ENCODE measurements at regions of chr11 and their contacts with region 1.

Region 1: GRCh38 chr11:62337303-62338181 is at the start of gene ASRGL1:
- DNase-seq: peak; percentile 80
- H3K4me3 ChIP-seq: peak within 1 kb of the TSS; percentile 74
- H3K27ac ChIP-seq: peak within 1 kb of the TSS; percentile 38
- H3K4me1 ChIP-seq: peaks cover 20% of the 10 kb centered on the region
- H3K27me3 ChIP-seq: peaks cover 12% of the 10 kb centered on the region
- CTCF ChIP-seq: no peak
- total RNA-seq, gene ASRGL1: 37.7 and 40.1 TPM in 2 replicates

Region 2: GRCh38 chr11:62069986-62070919 is 267.3 kb before region 1 on chr11:
- CTCF ChIA-PET with region 1: interaction called, 12 read pairs
- POLR2A ChIA-PET with region 1: no interaction called
- intact Hi-C with region 1: no loop called
- DNase-seq: no peak
- H3K4me3 ChIP-seq: no peak overlapping the region
- H3K27ac ChIP-seq: no peak overlapping the region
- H3K4me1 ChIP-seq: no peaks in the 10 kb centered on the region
- H3K27me3 ChIP-seq: no peaks in the 10 kb centered on the region
- CTCF ChIP-seq: no peak

Measured in A673 (cell line).